Activated CD4-positive, alpha-beta T cell treated with anti-CD3 and anti-CD28 coated beads for 36 hours (primary cell): ENCODE measurements at regions of chr11 and their contacts with region 1.

Region 1: DNA sequence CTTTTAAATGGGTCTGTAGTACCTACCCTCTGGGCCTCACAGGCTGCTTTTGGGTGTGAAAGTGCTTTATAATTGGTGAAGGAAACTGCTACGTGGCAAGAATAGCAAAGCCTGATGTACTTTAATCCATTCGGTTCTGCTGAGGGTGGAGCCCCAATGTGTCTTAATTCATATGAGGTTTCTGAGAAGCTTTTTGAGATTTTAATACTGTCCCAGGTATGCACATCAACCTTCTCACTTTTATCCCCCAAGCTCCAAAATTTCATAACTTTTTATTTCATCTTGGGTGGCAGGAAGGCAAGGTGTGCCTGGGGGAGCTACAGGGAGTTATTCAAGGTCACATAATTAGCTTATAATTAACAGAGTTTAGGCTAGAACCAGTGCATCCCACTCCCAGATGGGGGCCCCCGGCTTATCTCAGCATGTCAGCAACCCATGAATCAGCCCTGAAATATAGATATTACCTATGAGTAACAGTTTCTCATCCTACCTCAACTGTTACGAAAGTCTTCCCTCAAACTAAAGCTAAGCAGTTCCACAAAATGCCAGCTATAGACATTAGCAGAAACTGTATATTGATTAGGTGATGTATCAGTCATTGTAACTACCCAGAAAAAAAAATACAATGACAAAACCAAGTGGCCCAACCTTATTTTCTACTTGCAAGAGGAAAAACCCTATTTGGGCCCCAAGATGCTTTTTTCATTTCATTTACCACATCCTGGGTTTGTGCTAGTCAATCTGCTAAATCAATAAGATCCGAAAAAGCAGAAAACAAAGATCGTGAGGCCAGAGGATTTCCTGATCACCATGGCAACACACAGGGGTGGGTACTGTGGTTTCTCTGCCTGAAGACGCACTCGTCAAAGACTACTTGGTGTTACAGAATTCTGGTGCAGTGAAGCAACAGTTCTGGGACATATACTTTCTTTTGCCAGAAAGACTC is 26.7 kb downstream of the CD44 start:
- DNase-seq: peak; percentile 93
- ATAC-seq: peak; percentile 67
- H3K4me3 Mint-ChIP-seq: peak overlapping the region; percentile 64
- H3K27ac Mint-ChIP-seq: peak overlapping the region; percentile 98
- H3K4me1 Mint-ChIP-seq: peaks cover 100% of the 10 kb centered on the region
- H3K27me3 Mint-ChIP-seq: no peaks in the 10 kb centered on the region

Region 2: DNA sequence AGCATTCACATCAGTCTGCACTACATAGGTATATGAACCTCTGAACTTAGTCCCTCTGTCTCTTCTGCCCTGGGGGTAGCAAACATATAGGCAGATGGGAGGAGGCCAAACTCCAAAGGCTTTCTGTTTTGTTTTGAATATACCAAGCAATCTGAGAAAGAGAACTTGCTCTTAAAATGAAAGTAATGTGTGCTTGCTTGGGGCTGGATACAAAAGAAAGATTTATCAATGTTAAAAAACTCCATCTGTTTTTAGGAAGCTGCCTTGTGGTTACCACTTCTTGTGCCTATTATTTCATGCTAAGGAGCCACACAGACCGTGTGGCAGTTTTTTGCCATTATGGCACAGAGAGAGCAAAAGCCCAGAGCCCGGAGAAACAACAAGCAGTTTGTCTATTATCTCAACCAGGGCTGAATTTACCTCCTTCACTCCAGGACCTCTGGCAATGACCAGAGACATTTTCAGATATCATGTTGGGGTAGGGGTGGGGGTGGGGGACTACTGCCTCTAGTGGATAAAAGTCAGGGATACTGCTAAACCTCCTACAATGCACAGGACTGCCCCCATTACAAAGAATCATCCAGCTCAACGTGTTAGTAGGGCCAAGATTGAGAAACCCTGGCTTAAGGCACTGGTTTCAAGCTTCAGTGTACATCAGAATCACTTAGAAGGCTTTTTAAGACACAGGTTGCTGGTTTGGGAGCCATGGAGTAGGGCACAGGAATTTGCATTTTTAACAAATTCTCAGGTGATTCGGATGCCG is 373.7 kb before region 1 on chr11:
- CTCF ChIA-PET with region 1: no interaction called
- POLR2A ChIA-PET with region 1: no interaction called
- intact Hi-C with region 1: no loop called
- DNase-seq: no peak
- ATAC-seq: no peak
- H3K4me3 Mint-ChIP-seq: no peak overlapping the region
- H3K27ac Mint-ChIP-seq: no peak overlapping the region
- H3K4me1 Mint-ChIP-seq: no peaks in the 10 kb centered on the region
- H3K27me3 Mint-ChIP-seq: peaks cover 12% of the 10 kb centered on the region

Region 3: GRCh38 chr11:35013514-35014233 is 152.0 kb before region 1 on chr11:
- CTCF ChIA-PET with region 1: interaction called, 9 read pairs
- POLR2A ChIA-PET with region 1: interaction called, 3 read pairs
- intact Hi-C with region 1: loop called (anchors 1 kb)
- DNase-seq: peak; percentile 54
- ATAC-seq: peak; percentile 75
- H3K4me3 Mint-ChIP-seq: peak overlapping the region; percentile 34
- H3K27ac Mint-ChIP-seq: peak overlapping the region; percentile 74
- H3K4me1 Mint-ChIP-seq: peaks cover 49% of the 10 kb centered on the region
- H3K27me3 Mint-ChIP-seq: peaks cover 2% of the 10 kb centered on the region

Region 4: GRCh38 chr11:35040221-35040942 is 125.3 kb before region 1 on chr11:
- CTCF ChIA-PET with region 1: interaction called, 4 read pairs
- POLR2A ChIA-PET with region 1: interaction called, 10 read pairs
- intact Hi-C with region 1: loop called (anchors 1 kb)
- DNase-seq: peak; percentile 78
- ATAC-seq: peak; percentile 86
- H3K4me3 Mint-ChIP-seq: peak overlapping the region; percentile 79
- H3K27ac Mint-ChIP-seq: peak overlapping the region; percentile 98
- H3K4me1 Mint-ChIP-seq: peaks cover 80% of the 10 kb centered on the region
- H3K27me3 Mint-ChIP-seq: peaks cover 2% of the 10 kb centered on the region

Region 5: DNA sequence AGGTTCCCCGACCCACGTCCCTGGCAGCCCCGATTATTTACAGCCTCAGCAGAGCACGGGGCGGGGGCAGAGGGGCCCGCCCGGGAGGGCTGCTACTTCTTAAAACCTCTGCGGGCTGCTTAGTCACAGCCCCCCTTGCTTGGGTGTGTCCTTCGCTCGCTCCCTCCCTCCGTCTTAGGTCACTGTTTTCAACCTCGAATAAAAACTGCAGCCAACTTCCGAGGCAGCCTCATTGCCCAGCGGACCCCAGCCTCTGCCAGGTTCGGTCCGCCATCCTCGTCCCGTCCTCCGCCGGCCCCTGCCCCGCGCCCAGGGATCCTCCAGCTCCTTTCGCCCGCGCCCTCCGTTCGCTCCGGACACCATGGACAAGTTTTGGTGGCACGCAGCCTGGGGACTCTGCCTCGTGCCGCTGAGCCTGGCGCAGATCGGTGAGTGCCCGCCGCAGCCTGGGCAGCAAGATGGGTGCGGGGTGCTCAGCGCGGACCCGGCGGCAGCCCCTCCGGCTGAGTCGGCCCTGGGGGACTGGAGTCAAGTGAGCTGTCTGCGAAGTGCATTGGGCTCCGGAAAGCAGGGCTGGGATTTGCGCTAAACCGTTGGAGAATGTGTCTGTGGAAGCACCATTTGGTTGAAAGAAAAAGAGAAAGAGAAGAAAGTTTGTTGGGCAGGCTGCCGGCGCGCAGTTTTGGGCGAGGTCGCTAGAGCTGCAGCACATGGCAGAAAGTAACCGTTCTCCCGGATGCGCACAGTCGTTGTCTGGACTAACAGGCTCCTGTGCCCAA is 26.6 kb before region 1 on chr11 and contains the start of gene CD44:
- CTCF ChIA-PET with region 1: interaction called, 13 read pairs
- POLR2A ChIA-PET with region 1: interaction called, 29 read pairs
- intact Hi-C with region 1: no loop called
- DNase-seq: peak; percentile 83
- ATAC-seq: peak; percentile 67
- H3K4me3 Mint-ChIP-seq: peak within 1 kb of the TSS; percentile 83
- H3K27ac Mint-ChIP-seq: peak within 1 kb of the TSS; percentile 93
- H3K4me1 Mint-ChIP-seq: peaks cover 52% of the 10 kb centered on the region
- H3K27me3 Mint-ChIP-seq: no peaks in the 10 kb centered on the region
- total RNA-seq, gene CD44: 357 to 435 TPM

Region 6: GRCh38 chr11:35182317-35182939 is 16.7 kb after region 1 on chr11:
- CTCF ChIA-PET with region 1: interaction called, 56 read pairs
- POLR2A ChIA-PET with region 1: interaction called, 37 read pairs
- intact Hi-C with region 1: loop called (anchors 1 kb)
- DNase-seq: no peak
- ATAC-seq: peak; percentile 16
- H3K4me3 Mint-ChIP-seq: no peak overlapping the region
- H3K27ac Mint-ChIP-seq: peak overlapping the region; percentile 44
- H3K4me1 Mint-ChIP-seq: peaks cover 78% of the 10 kb centered on the region
- H3K27me3 Mint-ChIP-seq: no peaks in the 10 kb centered on the region

Region 7: GRCh38 chr11:35337136-35337918 is 171.6 kb after region 1 on chr11:
- CTCF ChIA-PET with region 1: interaction called, 3 read pairs
- POLR2A ChIA-PET with region 1: no interaction called
- intact Hi-C with region 1: loop called in 1 of 2 experiments (anchors 1 kb)
- DNase-seq: peak; percentile 46
- ATAC-seq: peak; percentile 96
- H3K4me3 Mint-ChIP-seq: no peak overlapping the region
- H3K27ac Mint-ChIP-seq: peak overlapping the region; percentile 19
- H3K4me1 Mint-ChIP-seq: peaks cover 36% of the 10 kb centered on the region
- H3K27me3 Mint-ChIP-seq: no peaks in the 10 kb centered on the region

Region 8: GRCh38 chr11:35919244-35919643 is 753.5 kb after region 1 on chr11:
- CTCF ChIA-PET with region 1: no interaction called
- POLR2A ChIA-PET with region 1: no interaction called
- intact Hi-C with region 1: no loop called
- DNase-seq: no peak
- ATAC-seq: no peak
- H3K4me3 Mint-ChIP-seq: no peak overlapping the region
- H3K27ac Mint-ChIP-seq: no peak overlapping the region
- H3K4me1 Mint-ChIP-seq: no peaks in the 10 kb centered on the region
- H3K27me3 Mint-ChIP-seq: peaks cover 7% of the 10 kb centered on the region